ENCODE measurements at regions of chr9 and their contacts with region 1.

Region 1: GRCh38 chr9:105881654-105882349 is 187.5 kb downstream of the TMEM38B start:
- DNase-seq: peak; percentile 68
- H3K4me3 Mint-ChIP-seq: no peak overlapping the region
- H3K27ac Mint-ChIP-seq: no peak overlapping the region
- H3K4me1 Mint-ChIP-seq: no peaks in the 10 kb centered on the region
- H3K27me3 Mint-ChIP-seq: peaks cover 14% of the 10 kb centered on the region
- CTCF ChIP-seq: peak; percentile 38

Region 2: GRCh38 chr9:105554042-105554441 is 327.8 kb before region 1 on chr9:
- CTCF ChIA-PET with region 1: no interaction called
- intact Hi-C with region 1: no loop called
- DNase-seq: no peak
- H3K4me3 Mint-ChIP-seq: no peak overlapping the region
- H3K27ac Mint-ChIP-seq: no peak overlapping the region
- H3K4me1 Mint-ChIP-seq: peaks cover 8% of the 10 kb centered on the region
- H3K27me3 Mint-ChIP-seq: no peaks in the 10 kb centered on the region
- CTCF ChIP-seq: no peak

Region 3: GRCh38 chr9:105608721-105609598 is 272.8 kb before region 1 on chr9:
- CTCF ChIA-PET with region 1: no interaction called
- intact Hi-C with region 1: loop called (anchors 2 kb)
- DNase-seq: no peak
- H3K4me3 Mint-ChIP-seq: no peak overlapping the region
- H3K27ac Mint-ChIP-seq: no peak overlapping the region
- H3K4me1 Mint-ChIP-seq: no peaks in the 10 kb centered on the region
- H3K27me3 Mint-ChIP-seq: no peaks in the 10 kb centered on the region
- CTCF ChIP-seq: no peak

Region 4: GRCh38 chr9:105921057-105921735 is 39.4 kb after region 1 on chr9:
- CTCF ChIA-PET with region 1: no interaction called
- intact Hi-C with region 1: no loop called
- DNase-seq: no peak
- H3K4me3 Mint-ChIP-seq: no peak overlapping the region
- H3K27ac Mint-ChIP-seq: no peak overlapping the region
- H3K4me1 Mint-ChIP-seq: no peaks in the 10 kb centered on the region
- H3K27me3 Mint-ChIP-seq: no peaks in the 10 kb centered on the region
- CTCF ChIP-seq: no peak